ENCODE measurements at regions of chr15 and their contacts with region 1.

Region 1: GRCh38 chr15:93087825-93088199 is 1.2 kb downstream of the RGMA start:
- DNase-seq: peak; percentile 74
- H3K27ac ChIP-seq: no peak overlapping the region
- CTCF ChIP-seq: peak; percentile 95

Region 2: GRCh38 chr15:93035953-93036800 is 51.6 kb before region 1 on chr15:
- CTCF ChIA-PET with region 1: interaction called, 12 read pairs
- POLR2A ChIA-PET with region 1: no interaction called
- DNase-seq: no peak
- H3K27ac ChIP-seq: peak overlapping the region; percentile 72
- CTCF ChIP-seq: peak; percentile 54

Region 3: DNA sequence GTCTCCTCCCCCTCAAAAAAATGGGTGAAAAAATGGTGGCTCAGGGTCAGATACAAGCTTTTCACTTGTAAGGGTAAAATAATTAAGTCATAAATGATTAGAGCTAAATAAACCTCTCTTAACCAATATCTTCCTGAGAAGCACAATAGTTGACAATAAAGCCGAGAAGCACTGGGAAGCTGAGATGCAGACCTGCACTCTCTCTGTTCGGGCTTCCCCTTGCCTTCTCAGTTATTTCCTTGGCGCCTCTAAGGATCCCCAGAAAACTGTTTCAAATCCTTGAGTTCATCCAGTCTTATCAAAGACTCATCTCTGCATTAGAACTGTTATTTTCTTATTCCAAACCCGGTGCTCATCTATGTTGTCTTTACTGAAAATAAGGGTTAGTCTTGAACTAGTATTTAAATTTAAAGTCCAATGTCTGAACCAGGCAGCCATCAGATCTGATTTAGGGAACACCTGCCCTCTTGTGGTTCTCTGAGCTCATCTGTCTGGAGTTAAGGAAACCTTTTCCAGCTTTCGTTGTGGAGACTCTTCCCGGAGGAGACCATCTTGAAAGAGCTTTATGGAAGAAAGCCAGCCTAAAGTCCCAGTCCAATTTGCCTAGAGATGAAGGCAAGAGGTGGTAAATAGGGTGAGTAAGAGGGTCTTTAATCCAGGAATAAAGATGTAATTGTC is 887.1 kb after region 1 on chr15:
- CTCF ChIA-PET with region 1: interaction called, 13 read pairs
- POLR2A ChIA-PET with region 1: no interaction called
- DNase-seq: peak; percentile 75
- H3K27ac ChIP-seq: no peak overlapping the region
- CTCF ChIP-seq: peak; percentile 74